K562 (cell line): ENCODE measurements at regions of chr14 and their contacts with region 1.

Region 1: GRCh38 chr14:95993768-95994592 is 45.2 kb upstream of the C14orf132 start:
- DNase-seq: peak; percentile 42 to 50 (median 48)
- ATAC-seq: peak; percentile 50; the same call in 1 of the 3 replicates
- H3K4me3 ChIP-seq: no peak overlapping the region
- H3K27ac ChIP-seq: no peak overlapping the region
- H3K4me1 ChIP-seq: no peaks in the 10 kb centered on the region
- H3K27me3 ChIP-seq: no peaks in the 10 kb centered on the region
- CTCF ChIP-seq: peak; percentile 61 to 76 (median 62); a peak in 5 of 6 replicates
- EP300 ChIP-seq: no peak
- POLR2A ChIP-seq: no peak
- RAD21 ChIP-seq: peak; percentile 67 to 81

Region 2: DNA sequence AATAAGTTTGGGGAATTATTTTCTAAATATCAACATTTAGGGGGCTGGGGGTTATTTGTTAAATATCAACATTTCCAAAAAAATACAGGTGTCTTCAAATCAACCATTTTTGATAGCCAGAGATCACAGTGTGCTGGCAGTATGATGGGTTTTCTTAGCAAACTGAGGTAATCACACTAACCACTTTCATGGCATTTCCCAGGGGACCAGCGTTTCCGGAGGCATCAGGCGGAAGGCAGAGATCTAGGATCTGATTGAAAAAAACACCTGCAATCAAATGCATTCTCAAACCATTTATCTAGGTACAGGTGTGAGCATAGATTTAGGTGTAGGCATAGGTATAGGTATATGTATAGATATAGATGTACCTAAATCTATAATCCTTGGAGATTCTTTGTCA is 424.5 kb before region 1 on chr14:
- CTCF ChIA-PET with region 1: no interaction called
- POLR2A ChIA-PET with region 1: no interaction called
- in situ Hi-C with region 1: loop called (anchors 5 kb)
- intact Hi-C with region 1: loop called (anchors 1 kb)
- DNase-seq: no peak
- ATAC-seq: no peak
- H3K4me3 ChIP-seq: no peak overlapping the region
- H3K27ac ChIP-seq: no peak overlapping the region
- H3K4me1 ChIP-seq: no peaks in the 10 kb centered on the region
- H3K27me3 ChIP-seq: no peaks in the 10 kb centered on the region
- CTCF ChIP-seq: no peak
- EP300 ChIP-seq: no peak
- POLR2A ChIP-seq: no peak
- RAD21 ChIP-seq: no peak

Region 3: DNA sequence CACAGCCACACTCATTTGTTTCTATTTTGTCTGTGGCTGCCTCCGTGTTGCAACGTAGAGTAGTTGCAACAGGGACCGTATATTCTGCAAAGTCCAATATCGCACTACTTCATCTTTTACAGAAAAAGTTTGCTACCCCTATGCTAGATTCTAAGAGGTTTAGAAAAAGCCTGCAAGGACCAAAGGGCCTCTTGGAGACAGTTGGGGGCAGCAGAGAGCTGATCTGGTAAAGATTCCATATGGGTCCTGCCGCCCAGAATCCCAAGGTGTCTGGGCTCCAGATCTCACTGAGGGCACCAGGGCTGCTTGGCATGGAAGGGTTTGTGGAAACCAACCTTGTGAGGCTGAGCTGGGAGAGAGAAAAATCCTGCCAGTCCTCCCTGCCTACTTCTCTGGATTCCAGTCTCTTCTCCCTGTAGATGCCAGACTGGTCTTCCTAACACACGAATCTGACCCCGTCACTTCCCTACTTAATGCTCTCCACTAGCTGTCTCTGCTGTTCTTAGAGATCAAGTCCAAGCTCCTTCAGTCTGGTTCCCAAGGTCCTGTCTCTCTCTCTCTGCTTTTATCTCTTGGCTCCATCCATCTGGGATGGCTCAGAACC is 384.5 kb before region 1 on chr14:
- CTCF ChIA-PET with region 1: no interaction called
- POLR2A ChIA-PET with region 1: no interaction called
- in situ Hi-C with region 1: no loop called
- intact Hi-C with region 1: loop called (anchors 2 kb)
- DNase-seq: peak; percentile 14 to 44 (median 18)
- ATAC-seq: peak; percentile 76
- H3K4me3 ChIP-seq: no peak overlapping the region
- H3K27ac ChIP-seq: no peak overlapping the region
- H3K4me1 ChIP-seq: no peaks in the 10 kb centered on the region
- H3K27me3 ChIP-seq: peaks cover 9 to 13% of the 10 kb centered on the region in 2 experiments; a peak in 4 of 5 replicates
- CTCF ChIP-seq: peak; percentile 47 to 68 (median 62)
- EP300 ChIP-seq: no peak
- POLR2A ChIP-seq: no peak
- RAD21 ChIP-seq: peak; percentile 41 to 61